ENCODE measurements at regions of chr3 and their contacts with region 1.

Region 1: GRCh38 chr3:161042023-161042501 is 63.1 kb downstream of the B3GALNT1 start:
- DNase-seq: no peak
- ATAC-seq: no peak
- H3K4me3 ChIP-seq: no peak overlapping the region
- H3K27ac ChIP-seq: no peak overlapping the region
- H3K4me1 ChIP-seq: no peaks in the 10 kb centered on the region
- H3K27me3 ChIP-seq: no peaks in the 10 kb centered on the region
- CTCF ChIP-seq: no peak
- EP300 ChIP-seq: no peak
- POLR2A ChIP-seq: no peak
- RAD21 ChIP-seq: no peak

Region 2: GRCh38 chr3:161139686-161140085 is 97.6 kb after region 1 on chr3:
- CTCF ChIA-PET with region 1: no interaction called
- POLR2A ChIA-PET with region 1: no interaction called
- in situ Hi-C with region 1: no loop called
- intact Hi-C with region 1: loop called (anchors 10 kb)
- DNase-seq: no peak
- ATAC-seq: no peak
- H3K4me3 ChIP-seq: no peak overlapping the region
- H3K27ac ChIP-seq: no peak overlapping the region
- H3K4me1 ChIP-seq: no peaks in the 10 kb centered on the region
- H3K27me3 ChIP-seq: no peaks in the 10 kb centered on the region
- CTCF ChIP-seq: no peak
- EP300 ChIP-seq: no peak
- POLR2A ChIP-seq: no peak
- RAD21 ChIP-seq: no peak

Region 3: DNA sequence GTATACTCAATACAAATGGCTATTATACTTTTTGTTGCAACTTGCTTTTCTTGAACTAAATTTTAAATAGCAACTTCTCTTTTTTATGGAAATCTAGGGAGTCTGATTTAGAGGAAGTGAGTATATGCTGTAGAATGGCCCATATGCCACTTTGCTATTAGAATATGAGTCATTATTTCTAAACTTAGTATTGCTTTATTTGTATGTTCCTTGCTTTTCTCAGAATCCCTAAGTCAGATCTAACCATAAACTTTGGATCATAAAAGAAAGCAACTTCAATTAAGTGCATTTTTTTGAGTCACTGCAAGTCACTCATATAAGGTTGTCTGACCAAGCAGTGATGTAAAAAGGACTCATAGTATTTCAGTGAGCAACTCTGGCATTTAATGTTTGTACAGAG is 346.8 kb after region 1 on chr3:
- CTCF ChIA-PET with region 1: no interaction called
- POLR2A ChIA-PET with region 1: no interaction called
- in situ Hi-C with region 1: no loop called
- intact Hi-C with region 1: no loop called
- DNase-seq: no peak
- ATAC-seq: no peak
- H3K4me3 ChIP-seq: no peak overlapping the region
- H3K27ac ChIP-seq: no peak overlapping the region
- H3K4me1 ChIP-seq: no peaks in the 10 kb centered on the region
- H3K27me3 ChIP-seq: no peaks in the 10 kb centered on the region
- CTCF ChIP-seq: no peak
- EP300 ChIP-seq: no peak
- POLR2A ChIP-seq: no peak
- RAD21 ChIP-seq: no peak